Caco-2 (cell line): ENCODE measurements at regions of chr17 and their contacts with region 1.

Region 1: GRCh38 chr17:47229535-47230443 is 20.6 kb downstream of the MYL4 start:
- DNase-seq: peak; percentile 85 to 86
- H3K4me3 ChIP-seq: peak overlapping the region; percentile 8
- H3K4me3 Mint-ChIP-seq: peak overlapping the region; percentile 63
- H3K27ac Mint-ChIP-seq: peak overlapping the region; percentile 2
- H3K4me1 ChIP-seq: peaks cover 4% of the 10 kb centered on the region; the same call in 1 of the 2 replicates
- H3K4me1 Mint-ChIP-seq: peaks cover 16% of the 10 kb centered on the region
- H3K27me3 ChIP-seq: no peaks in the 10 kb centered on the region
- H3K27me3 Mint-ChIP-seq: peaks cover 4% of the 10 kb centered on the region
- CTCF ChIP-seq: peak; percentile 95 to 98

Region 2: DNA sequence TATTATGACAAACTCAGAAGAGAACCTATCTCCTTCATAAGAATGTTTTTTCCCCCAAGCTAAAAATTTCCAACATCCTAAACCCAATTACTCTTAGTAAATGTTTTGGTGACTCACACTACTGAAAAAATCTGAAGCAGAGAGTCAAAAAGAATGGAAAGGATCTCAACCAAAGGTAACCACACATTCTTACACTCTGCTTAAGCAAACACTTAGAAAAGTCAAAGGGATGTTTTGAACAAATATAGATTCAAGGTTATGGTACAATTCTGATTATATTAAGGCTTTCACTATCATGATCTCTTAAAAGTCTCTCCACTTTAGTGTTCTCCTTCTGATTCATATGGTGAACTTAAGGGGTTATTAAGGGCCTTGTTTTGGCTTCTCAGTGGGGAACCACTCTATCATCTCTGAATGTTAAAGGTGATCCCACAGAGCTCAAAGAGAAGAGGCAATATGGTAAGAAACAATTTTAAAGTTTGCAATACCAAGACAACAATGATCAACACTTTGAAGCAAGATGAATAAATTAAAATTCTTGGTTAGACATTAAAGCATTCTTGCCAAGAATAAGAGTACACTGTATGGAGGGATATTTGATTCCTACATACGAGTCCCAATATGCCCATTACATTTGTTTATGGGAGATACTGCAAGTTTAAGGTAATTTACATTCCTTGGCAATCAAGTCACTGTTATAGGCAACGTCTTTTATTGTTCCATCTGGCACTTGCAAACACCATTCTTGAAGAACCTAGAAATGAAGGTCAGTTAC is 109.9 kb before region 1 on chr17:
- CTCF ChIA-PET with region 1: no interaction called
- POLR2A ChIA-PET with region 1: no interaction called
- intact Hi-C with region 1: no loop called
- DNase-seq: no peak
- H3K4me3 ChIP-seq: no peak overlapping the region
- H3K4me3 Mint-ChIP-seq: no peak overlapping the region
- H3K27ac Mint-ChIP-seq: no peak overlapping the region
- H3K4me1 ChIP-seq: no peaks in the 10 kb centered on the region
- H3K4me1 Mint-ChIP-seq: no peaks in the 10 kb centered on the region
- H3K27me3 ChIP-seq: no peaks in the 10 kb centered on the region
- H3K27me3 Mint-ChIP-seq: no peaks in the 10 kb centered on the region
- CTCF ChIP-seq: no peak

Region 3: GRCh38 chr17:47239619-47240374 is 10.0 kb after region 1 on chr17:
- CTCF ChIA-PET with region 1: no interaction called
- POLR2A ChIA-PET with region 1: no interaction called
- intact Hi-C with region 1: no loop called
- DNase-seq: no peak
- H3K4me3 ChIP-seq: no peak overlapping the region
- H3K4me3 Mint-ChIP-seq: no peak overlapping the region
- H3K27ac Mint-ChIP-seq: no peak overlapping the region
- H3K4me1 ChIP-seq: no peaks in the 10 kb centered on the region
- H3K4me1 Mint-ChIP-seq: no peaks in the 10 kb centered on the region
- H3K27me3 ChIP-seq: 0 out of 2 replicates have a peak, but pooled peaks cover 2% of the 10 kb centered on the region
- H3K27me3 Mint-ChIP-seq: peaks cover 4% of the 10 kb centered on the region
- CTCF ChIP-seq: no peak

Region 4: GRCh38 chr17:47265983-47266541 is 36.3 kb after region 1 on chr17:
- CTCF ChIA-PET with region 1: interaction called, 11 read pairs
- POLR2A ChIA-PET with region 1: no interaction called
- intact Hi-C with region 1: no loop called
- DNase-seq: no peak
- H3K4me3 ChIP-seq: no peak overlapping the region
- H3K4me3 Mint-ChIP-seq: no peak overlapping the region
- H3K27ac Mint-ChIP-seq: no peak overlapping the region
- H3K4me1 ChIP-seq: peaks cover 17% of the 10 kb centered on the region; the same call in 1 of the 2 replicates
- H3K4me1 Mint-ChIP-seq: no peaks in the 10 kb centered on the region
- H3K27me3 ChIP-seq: no peaks in the 10 kb centered on the region
- H3K27me3 Mint-ChIP-seq: no peaks in the 10 kb centered on the region
- CTCF ChIP-seq: no peak